ENCODE measurements at regions of chr7 and their contacts with region 1.

Region 1: GRCh38 chr7:150448789-150449147 is 1.7 kb upstream of the GIMAP8 start:
- DNase-seq: peak; percentile 48
- ATAC-seq: peak; percentile 95
- H3K4me3 ChIP-seq: no peak overlapping the region
- H3K27ac ChIP-seq: no peak overlapping the region
- H3K4me1 ChIP-seq: no peaks in the 10 kb centered on the region
- H3K27me3 ChIP-seq: no peaks in the 10 kb centered on the region
- CTCF ChIP-seq: peak; percentile 73 to 96 (median 90)
- POLR2A ChIP-seq: no peak
- RAD21 ChIP-seq: peak; percentile 89

Region 2: GRCh38 chr7:150524018-150524417 is 75.2 kb after region 1 on chr7:
- CTCF ChIA-PET with region 1: no interaction called
- POLR2A ChIA-PET with region 1: no interaction called
- RAD21 ChIA-PET with region 1: no interaction called
- intact Hi-C with region 1: no loop called
- DNase-seq: no peak
- ATAC-seq: no peak
- H3K4me3 ChIP-seq: no peak overlapping the region
- H3K27ac ChIP-seq: no peak overlapping the region
- H3K4me1 ChIP-seq: no peaks in the 10 kb centered on the region
- H3K27me3 ChIP-seq: peaks cover 17% of the 10 kb centered on the region
- CTCF ChIP-seq: no peak
- POLR2A ChIP-seq: no peak
- RAD21 ChIP-seq: no peak

Region 3: GRCh38 chr7:150756858-150757257 is 308.1 kb after region 1 on chr7:
- CTCF ChIA-PET with region 1: interaction called, 7 read pairs
- POLR2A ChIA-PET with region 1: no interaction called
- RAD21 ChIA-PET with region 1: no interaction called
- intact Hi-C with region 1: loop called (anchors 2 kb)
- DNase-seq: no peak
- ATAC-seq: no peak
- H3K4me3 ChIP-seq: no peak overlapping the region
- H3K27ac ChIP-seq: no peak overlapping the region
- H3K4me1 ChIP-seq: no peaks in the 10 kb centered on the region
- H3K27me3 ChIP-seq: peaks cover 2% of the 10 kb centered on the region
- CTCF ChIP-seq: peak; percentile 17 to 41 (median 34); a peak in 4 of 6 replicates
- POLR2A ChIP-seq: no peak
- RAD21 ChIP-seq: peak; percentile 63

Region 4: DNA sequence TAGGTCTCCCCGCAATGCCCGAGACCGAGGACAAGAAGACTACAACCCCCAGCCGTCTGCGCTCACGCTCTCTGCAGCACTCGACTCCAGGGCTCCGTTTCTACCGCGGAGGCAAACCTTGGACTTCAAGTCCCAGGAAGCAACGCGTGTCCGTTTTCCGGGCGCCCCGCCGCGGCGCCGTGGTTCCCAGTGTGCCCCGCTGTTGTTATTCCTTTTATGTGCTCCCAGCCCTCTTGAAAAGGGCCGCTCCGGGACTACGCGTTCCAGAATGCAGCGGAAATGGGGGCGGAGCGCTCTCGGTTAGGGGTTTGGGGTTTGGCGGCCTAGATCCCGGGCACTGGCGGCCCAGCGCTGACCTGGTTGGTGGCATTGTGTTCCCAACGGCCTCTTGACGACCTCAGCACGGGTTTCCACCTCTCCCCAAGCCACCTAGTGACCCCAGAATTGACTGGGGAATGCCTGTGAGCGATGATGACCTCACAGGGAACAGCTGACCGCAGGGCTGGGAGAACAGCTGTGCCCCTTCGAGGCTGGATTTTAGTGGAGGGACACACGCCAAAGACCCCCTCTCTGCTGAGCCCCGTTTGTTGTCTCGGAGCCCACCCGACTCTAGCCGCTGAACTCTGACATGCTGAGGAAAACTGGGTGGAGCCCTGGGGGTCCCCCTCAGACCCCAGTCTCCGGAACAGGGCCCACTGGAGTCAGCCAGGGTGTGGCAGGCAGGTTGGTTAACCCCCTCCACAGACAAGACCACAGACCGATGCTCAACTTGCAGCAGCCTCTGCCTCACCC is 609.4 kb after region 1 on chr7:
- CTCF ChIA-PET with region 1: no interaction called
- POLR2A ChIA-PET with region 1: no interaction called
- RAD21 ChIA-PET with region 1: no interaction called
- intact Hi-C with region 1: no loop called
- DNase-seq: peak; percentile 99
- ATAC-seq: peak; percentile 75
- H3K4me3 ChIP-seq: peak overlapping the region; percentile 81 to 90
- H3K27ac ChIP-seq: peak overlapping the region; percentile 87
- H3K4me1 ChIP-seq: peaks cover 25 to 48% of the 10 kb centered on the region in 2 experiments
- H3K27me3 ChIP-seq: no peaks in the 10 kb centered on the region
- CTCF ChIP-seq: no peak
- POLR2A ChIP-seq: peak; percentile 71
- RAD21 ChIP-seq: no peak

Region 5: GRCh38 chr7:151091431-151091830 is 642.7 kb after region 1 on chr7:
- CTCF ChIA-PET with region 1: no interaction called
- POLR2A ChIA-PET with region 1: no interaction called
- RAD21 ChIA-PET with region 1: no interaction called
- intact Hi-C with region 1: no loop called
- DNase-seq: no peak
- ATAC-seq: peak; percentile 44
- H3K4me3 ChIP-seq: no peak overlapping the region
- H3K27ac ChIP-seq: no peak overlapping the region
- H3K4me1 ChIP-seq: peaks cover 5 to 10% of the 10 kb centered on the region in 2 experiments; a peak in 3 of 4 replicates
- H3K27me3 ChIP-seq: no peaks in the 10 kb centered on the region
- CTCF ChIP-seq: peak in 2 of 3 experiments; percentile 64 to 74; a peak in 4 of 6 replicates
- POLR2A ChIP-seq: no peak
- RAD21 ChIP-seq: no peak